Testis (tissue), 5 donors: ENCODE measurements at regions of chr9 and their contacts with region 1.

Region 1: GRCh38 chr9:115764645-115765044 is 388.9 kb upstream of the PAPPA start:
- DNase-seq: no peak
- H3K4me3 ChIP-seq: no peak overlapping the region
- H3K27ac ChIP-seq: no peak overlapping the region
- H3K4me1 ChIP-seq: no peaks in the 10 kb centered on the region
- H3K27me3 ChIP-seq: no peaks in the 10 kb centered on the region
- CTCF ChIP-seq: no peak
- POLR2A ChIP-seq: no peak

Region 2: GRCh38 chr9:116471093-116471906 is 706.7 kb after region 1 on chr9:
- intact Hi-C with region 1: loop called (anchors 10 kb)
- DNase-seq: peak; percentile 77
- H3K4me3 ChIP-seq: no peak overlapping the region
- H3K27ac ChIP-seq: peak overlapping the region; percentile 3 to 56
- H3K4me1 ChIP-seq: peaks cover 17% of the 10 kb centered on the region
- H3K27me3 ChIP-seq: no peaks in the 10 kb centered on the region
- CTCF ChIP-seq: no peak
- POLR2A ChIP-seq: no peak